Thyroid gland (tissue), 4 donors: ENCODE measurements at regions of chr12 and their contacts with region 1.

Region 1: DNA sequence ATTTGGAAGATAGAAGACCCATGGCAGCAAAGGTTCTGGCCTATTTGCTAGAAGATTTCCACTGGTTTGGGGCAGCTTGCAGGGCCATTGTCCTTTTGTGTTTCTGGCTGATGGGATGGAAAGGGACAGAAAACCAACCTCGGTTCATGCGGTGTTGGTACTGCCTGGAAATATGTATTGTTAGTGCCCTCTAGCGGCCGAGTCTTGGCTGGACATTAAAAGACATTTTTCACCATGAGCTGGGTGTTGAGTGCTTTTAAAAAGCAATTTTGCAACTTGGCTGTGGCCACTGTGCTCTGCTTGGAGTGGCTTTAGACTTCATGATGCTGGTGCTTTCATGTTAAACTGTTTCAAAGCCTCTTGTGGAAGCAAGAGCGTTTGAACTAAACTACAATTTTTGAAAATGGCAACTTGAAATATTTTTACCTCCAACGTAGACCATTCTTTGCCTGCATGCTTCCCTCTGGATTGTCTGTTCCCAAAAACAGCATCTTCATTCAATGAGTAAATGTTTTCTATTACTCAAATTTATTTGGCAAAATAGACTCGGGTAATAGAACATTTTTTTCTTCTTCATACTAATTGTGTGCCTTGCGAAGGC is 102.7 kb upstream of the TBX5 start:
- DNase-seq: peak; percentile 74 to 80
- H3K4me3 ChIP-seq: no peak overlapping the region
- H3K27ac ChIP-seq: no peak overlapping the region
- H3K4me1 ChIP-seq: no peaks in the 10 kb centered on the region
- H3K27me3 ChIP-seq: no peaks in the 10 kb centered on the region
- CTCF ChIP-seq: peak; percentile 62 to 79 (median 71)
- POLR2A ChIP-seq: no peak

Region 2: DNA sequence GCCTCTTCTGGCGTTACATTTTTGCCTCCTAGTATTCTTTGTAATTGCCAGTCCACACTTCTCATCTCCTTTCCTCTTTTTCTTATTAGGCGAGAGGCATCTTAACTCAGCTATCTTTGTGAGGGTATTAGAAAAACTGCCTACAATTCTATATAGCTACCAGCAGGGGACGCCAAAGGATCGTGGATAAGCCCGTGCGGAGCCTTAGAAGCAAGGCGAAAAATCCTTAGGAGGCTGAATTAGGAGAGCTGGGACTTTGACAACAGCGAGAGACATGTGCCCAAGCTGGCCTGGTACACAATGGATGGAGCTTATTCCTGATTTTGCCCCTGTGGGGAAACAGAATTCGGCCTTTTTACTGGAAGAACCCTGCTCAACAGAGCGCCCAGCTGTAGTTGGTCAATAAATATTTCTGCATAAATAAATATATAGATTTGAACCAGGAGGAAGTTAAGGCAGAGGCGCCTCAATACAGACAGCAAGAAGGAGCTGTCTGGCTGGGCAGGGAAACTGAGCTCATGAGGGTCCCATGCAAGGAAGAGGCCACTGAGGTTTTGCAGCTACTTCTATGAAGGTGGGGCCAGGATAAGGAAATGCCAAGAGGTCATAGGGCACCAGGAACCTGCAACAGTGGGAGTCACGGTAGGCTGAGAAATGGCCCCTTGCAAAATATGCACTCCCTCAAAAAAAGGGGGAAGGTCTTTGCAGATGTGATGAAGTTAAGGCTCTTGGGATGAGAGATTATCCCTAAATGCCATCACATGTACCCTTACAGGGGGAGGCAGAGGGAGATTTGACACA is 527.9 kb before region 1 on chr12:
- intact Hi-C with region 1: loop called (anchors 5 kb)
- DNase-seq: peak; percentile 17 to 30
- H3K4me3 ChIP-seq: no peak overlapping the region
- H3K27ac ChIP-seq: no peak overlapping the region
- H3K4me1 ChIP-seq: no peaks in the 10 kb centered on the region
- H3K27me3 ChIP-seq: no peaks in the 10 kb centered on the region
- CTCF ChIP-seq: peak; percentile 80 to 92 (median 90)
- POLR2A ChIP-seq: no peak

Region 3: GRCh38 chr12:114166362-114166761 is 342.3 kb before region 1 on chr12:
- intact Hi-C with region 1: loop called (anchors 5 kb)
- DNase-seq: peak; percentile 40 to 47
- H3K4me3 ChIP-seq: no peak overlapping the region
- H3K27ac ChIP-seq: no peak overlapping the region
- H3K4me1 ChIP-seq: no peaks in the 10 kb centered on the region
- H3K27me3 ChIP-seq: no peaks in the 10 kb centered on the region
- CTCF ChIP-seq: peak in 5 of 6 experiments; percentile 31 to 70 (median 62)
- POLR2A ChIP-seq: no peak

Region 4: DNA sequence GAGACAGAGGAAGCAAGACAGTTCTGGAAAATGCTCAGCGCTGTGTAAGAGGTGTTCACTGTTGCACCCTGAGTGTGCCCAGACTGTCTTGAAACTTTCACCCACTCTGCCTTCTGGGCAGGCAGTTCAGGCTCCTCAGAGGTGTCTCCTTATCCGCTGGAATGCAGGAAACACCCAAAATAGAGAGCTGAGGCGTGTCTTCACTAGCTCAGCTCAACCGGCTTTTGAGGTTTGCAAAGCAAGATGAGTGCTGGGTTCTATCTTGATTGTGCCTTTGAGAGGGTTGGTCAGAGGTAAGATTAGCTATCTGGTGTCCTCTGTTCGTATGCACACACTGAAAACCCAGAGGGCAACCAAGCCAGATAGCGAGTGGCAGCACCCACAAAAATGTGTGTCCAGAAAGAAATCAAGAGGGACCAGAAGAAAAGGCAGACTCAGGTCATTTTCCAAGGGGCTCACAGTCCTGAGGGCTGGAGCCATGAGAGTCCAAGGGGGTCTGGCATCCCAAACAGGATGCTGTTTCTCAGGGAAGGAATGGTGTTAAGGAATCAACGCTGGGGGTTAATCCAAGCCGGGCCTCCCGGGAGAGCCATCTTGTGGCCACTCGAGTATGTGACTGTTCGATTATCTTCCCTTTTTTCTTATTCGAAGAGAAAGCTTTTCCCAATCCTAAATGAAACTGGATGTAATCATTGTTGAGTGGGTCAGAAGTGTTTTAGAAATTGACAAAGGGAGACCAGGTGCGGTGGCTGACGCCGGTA is 128.3 kb after region 1 on chr12:
- intact Hi-C with region 1: no loop called
- DNase-seq: peak in 1 of 2 donors; percentile 22
- H3K4me3 ChIP-seq: no peak overlapping the region
- H3K27ac ChIP-seq: peak overlapping the region; percentile 54 to 88 (median 65)
- H3K4me1 ChIP-seq: peaks cover 11 to 12% of the 10 kb centered on the region in 2 donors
- H3K27me3 ChIP-seq: no peaks in the 10 kb centered on the region
- CTCF ChIP-seq: peak in 1 of 6 experiments; percentile 10
- POLR2A ChIP-seq: no peak

Region 5: GRCh38 chr12:114655934-114656749 is 147.5 kb after region 1 on chr12:
- intact Hi-C with region 1: no loop called
- DNase-seq: no peak
- H3K4me3 ChIP-seq: no peak overlapping the region
- H3K27ac ChIP-seq: no peak overlapping the region
- H3K4me1 ChIP-seq: peaks cover 0 to 16% of the 10 kb centered on the region in 2 donors
- H3K27me3 ChIP-seq: no peaks in the 10 kb centered on the region
- CTCF ChIP-seq: no peak
- POLR2A ChIP-seq: no peak